ENCODE measurements at regions of chr3 and their contacts with region 1.

Region 1: GRCh38 chr3:107927361-107928083 is 163.3 kb downstream of the CD47 start:
- DNase-seq: peak; percentile 79
- ATAC-seq: peak; percentile 96
- H3K4me3 Mint-ChIP-seq: peak overlapping the region; percentile 75
- H3K27ac Mint-ChIP-seq: peak overlapping the region; percentile 32
- H3K4me1 Mint-ChIP-seq: peaks cover 9% of the 10 kb centered on the region
- H3K27me3 Mint-ChIP-seq: peaks cover 6% of the 10 kb centered on the region
- CTCF ChIP-seq: peak; percentile 94

Region 2: GRCh38 chr3:107910713-107911259 is 16.7 kb before region 1 on chr3:
- CTCF ChIA-PET with region 1: interaction called, 20 read pairs
- POLR2A ChIA-PET with region 1: no interaction called
- intact Hi-C with region 1: no loop called
- DNase-seq: peak; percentile 70
- ATAC-seq: peak; percentile 91
- H3K4me3 Mint-ChIP-seq: no peak overlapping the region
- H3K27ac Mint-ChIP-seq: no peak overlapping the region
- H3K4me1 Mint-ChIP-seq: peaks cover 16% of the 10 kb centered on the region
- H3K27me3 Mint-ChIP-seq: peaks cover 3% of the 10 kb centered on the region
- CTCF ChIP-seq: no peak

Region 3: DNA sequence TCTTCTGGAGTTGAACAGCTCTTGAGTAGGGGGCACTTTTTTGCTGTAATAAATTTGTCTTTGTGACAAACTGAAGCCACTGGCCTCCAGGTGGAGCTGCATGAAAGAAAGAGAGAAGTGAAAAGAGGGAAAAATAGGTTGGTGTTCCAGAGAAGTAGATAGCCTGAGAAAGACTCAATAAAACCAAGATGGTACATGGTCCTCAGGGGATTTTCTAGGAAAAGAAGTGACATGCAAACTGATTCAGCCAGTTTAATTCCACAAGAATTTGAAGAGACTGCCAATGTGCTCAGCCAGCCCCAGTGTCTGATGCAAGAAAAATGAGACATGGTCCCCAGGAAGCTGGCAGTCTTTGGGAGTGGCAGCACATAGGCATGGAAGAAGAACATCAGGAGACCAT is 10.6 kb after region 1 on chr3:
- CTCF ChIA-PET with region 1: interaction called, 61 read pairs
- POLR2A ChIA-PET with region 1: interaction called, 6 read pairs
- intact Hi-C with region 1: no loop called
- DNase-seq: peak; percentile 18
- ATAC-seq: no peak
- H3K4me3 Mint-ChIP-seq: no peak overlapping the region
- H3K27ac Mint-ChIP-seq: no peak overlapping the region
- H3K4me1 Mint-ChIP-seq: peaks cover 22% of the 10 kb centered on the region
- H3K27me3 Mint-ChIP-seq: peaks cover 2% of the 10 kb centered on the region
- CTCF ChIP-seq: peak; percentile 26

Region 4: GRCh38 chr3:108079877-108080659 is 152.5 kb after region 1 on chr3:
- CTCF ChIA-PET with region 1: interaction called, 11 read pairs
- POLR2A ChIA-PET with region 1: no interaction called
- intact Hi-C with region 1: no loop called
- DNase-seq: no peak
- ATAC-seq: peak; percentile 72
- H3K4me3 Mint-ChIP-seq: peak overlapping the region; percentile 34
- H3K27ac Mint-ChIP-seq: peak overlapping the region; percentile 67
- H3K4me1 Mint-ChIP-seq: peaks cover 71% of the 10 kb centered on the region
- H3K27me3 Mint-ChIP-seq: no peaks in the 10 kb centered on the region
- CTCF ChIP-seq: no peak

Measured in activated CD8-positive, alpha-beta T cell treated with anti-CD3 and anti-CD28 coated beads for 36 hours (primary cell).